ENCODE measurements at regions of chr9 and their contacts with region 1.

Region 1: DNA sequence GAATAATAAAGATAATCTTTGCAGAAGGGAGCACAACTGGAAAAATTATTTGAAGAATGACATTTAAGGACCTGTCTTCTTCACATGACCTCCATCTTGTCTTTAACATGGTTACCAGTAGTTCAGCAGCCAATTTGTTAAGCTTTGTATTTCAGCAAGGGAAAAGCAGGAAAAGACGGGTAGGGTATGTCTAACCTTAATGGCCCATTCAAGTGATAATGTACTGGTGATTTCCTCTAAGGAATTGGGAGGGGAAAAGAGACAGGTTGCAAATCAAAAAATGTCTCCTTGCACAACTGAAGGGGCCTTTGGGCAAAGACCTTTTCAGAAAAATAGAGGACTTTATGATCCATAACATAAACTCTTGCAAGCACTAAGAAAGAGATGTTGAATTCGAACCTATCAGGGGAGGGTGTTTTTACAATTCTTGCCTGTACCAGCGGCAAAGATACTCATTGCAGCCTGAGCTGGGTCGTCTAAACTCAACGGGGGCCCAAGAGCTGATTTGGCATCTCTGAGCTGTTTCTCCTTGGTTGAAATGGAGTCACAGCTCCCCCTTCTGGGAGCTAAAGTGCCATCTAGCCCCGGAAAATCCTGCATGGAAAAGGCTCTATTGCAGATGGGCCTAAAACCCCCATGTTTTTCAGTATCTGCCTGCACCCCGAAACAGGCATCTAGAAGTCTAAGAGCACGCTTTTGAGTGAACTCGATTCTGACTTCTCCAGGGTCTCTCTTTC is 3.8 kb downstream of the BRINP1 start:
- DNase-seq: peak; percentile 6
- ATAC-seq: peak; percentile 63; the same call in 2 of the 3 replicates
- H3K4me3 ChIP-seq: no peak overlapping the region
- H3K27ac ChIP-seq: no peak overlapping the region
- H3K4me1 ChIP-seq: no peaks in the 10 kb centered on the region
- H3K27me3 ChIP-seq: no peaks in the 10 kb centered on the region
- CTCF ChIP-seq: peak; percentile 65
- EP300 ChIP-seq: no peak
- POLR2A ChIP-seq: no peak
- RAD21 ChIP-seq: peak; percentile 32; the same call in 1 of the 2 replicates

Region 2: DNA sequence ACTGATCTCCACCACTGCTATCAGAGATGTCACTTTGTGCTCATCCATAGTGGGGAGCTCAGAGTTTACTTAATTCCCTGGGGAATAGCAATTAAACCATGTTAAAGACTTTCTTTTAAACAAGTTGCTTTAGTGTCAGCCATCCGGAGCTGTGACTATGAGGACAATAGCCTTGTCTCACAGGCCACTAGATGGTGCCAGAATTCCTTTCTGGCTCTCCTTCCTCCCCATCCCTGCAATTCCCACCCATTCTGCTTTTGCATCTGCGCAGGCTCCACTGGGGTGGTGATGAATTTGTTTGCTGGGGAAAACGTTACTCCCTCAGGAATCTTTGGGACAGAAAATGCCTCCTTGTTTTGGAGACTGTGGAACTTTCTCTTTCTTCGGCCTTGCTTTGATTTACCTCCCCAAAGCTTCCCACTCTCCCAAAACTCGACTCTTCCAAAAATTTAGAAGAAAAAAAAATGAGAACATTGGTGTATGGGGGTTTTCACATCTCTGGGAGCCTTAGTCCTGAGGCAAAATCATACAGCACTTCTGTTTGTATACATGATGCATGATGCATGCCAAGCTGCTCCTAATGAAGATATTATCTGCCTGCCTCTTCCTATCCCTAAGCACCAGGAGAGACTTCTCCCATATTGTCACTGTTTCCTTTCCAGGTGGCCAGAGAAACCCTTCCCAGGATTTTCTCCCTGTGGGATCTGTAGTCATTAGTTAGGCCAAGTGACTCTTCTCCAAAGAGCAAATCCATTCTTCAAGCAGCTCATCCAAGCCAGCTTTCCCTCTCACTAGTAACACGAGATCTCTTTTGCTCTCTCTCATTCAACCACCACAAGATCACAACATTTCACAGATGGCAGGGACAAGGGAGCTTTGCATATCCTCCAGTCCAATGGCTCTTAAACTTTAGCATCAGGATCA is 1195.2 kb before region 1 on chr9:
- CTCF ChIA-PET with region 1: no interaction called
- POLR2A ChIA-PET with region 1: no interaction called
- in situ Hi-C with region 1: loop called (anchors 25 kb)
- intact Hi-C with region 1: no loop called
- DNase-seq: peak; percentile 7
- ATAC-seq: peak; percentile 62
- H3K4me3 ChIP-seq: no peak overlapping the region
- H3K27ac ChIP-seq: no peak overlapping the region
- H3K4me1 ChIP-seq: no peaks in the 10 kb centered on the region
- H3K27me3 ChIP-seq: no peaks in the 10 kb centered on the region
- CTCF ChIP-seq: peak; percentile 51
- EP300 ChIP-seq: no peak
- POLR2A ChIP-seq: no peak
- RAD21 ChIP-seq: no peak